Head of caudate nucleus (tissue), 42 donors: ENCODE measurements at regions of chr22 and their contacts with region 1.

Region 1: DNA sequence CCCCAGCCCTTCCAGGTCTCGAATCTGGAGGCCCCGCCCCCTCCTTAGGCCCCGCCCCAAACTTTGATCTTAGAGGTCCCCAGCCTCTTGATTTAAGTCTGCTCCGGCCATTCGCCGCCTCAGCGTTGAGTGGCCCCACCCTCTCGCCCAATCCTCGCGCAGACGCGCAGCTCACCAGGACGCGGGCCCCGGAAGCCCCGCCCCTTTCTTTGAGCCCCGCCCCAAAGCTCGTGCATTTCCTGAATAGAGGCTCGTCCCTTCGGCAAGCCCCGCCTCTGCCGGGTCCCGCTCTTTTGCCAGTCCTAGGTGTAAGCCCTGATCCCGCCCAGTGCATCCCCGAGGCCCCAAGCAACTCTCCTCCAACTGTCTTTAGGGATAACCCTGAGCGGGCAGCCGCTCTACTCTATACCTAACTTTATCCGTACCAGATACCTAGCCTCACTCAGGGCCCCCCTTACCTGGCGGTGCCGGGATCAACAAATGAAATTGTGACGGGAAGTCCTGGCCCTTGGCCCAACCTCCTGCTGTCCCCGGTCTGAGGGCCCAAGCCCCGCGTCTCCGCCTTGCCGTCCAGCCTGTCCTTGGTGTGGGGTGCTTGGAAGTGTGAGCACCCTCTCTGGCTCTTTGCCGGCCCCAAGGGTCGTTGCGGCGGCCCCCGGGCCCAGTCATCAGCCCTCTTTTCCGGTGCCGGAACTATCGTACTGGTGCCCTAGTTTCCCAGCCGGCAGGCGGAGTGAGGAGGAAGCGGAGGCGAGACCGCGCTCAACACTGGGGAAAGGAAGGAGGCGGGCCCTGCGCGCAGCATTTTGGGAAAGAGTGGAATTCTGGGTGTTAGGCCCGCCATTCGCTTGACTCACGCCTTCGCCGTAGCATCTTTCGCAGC is at the start of gene SNRPD3:
- DNase-seq: peak; percentile 98 to 100 (median 99)

Region 2: GRCh38 chr22:24270638-24271408 is 284.6 kb before region 1 on chr22 and contains the start of gene SPECC1L:
- intact Hi-C with region 1: loop called (anchors 10 kb)
- DNase-seq: peak; percentile 69 to 95 (median 88)

Region 3: DNA sequence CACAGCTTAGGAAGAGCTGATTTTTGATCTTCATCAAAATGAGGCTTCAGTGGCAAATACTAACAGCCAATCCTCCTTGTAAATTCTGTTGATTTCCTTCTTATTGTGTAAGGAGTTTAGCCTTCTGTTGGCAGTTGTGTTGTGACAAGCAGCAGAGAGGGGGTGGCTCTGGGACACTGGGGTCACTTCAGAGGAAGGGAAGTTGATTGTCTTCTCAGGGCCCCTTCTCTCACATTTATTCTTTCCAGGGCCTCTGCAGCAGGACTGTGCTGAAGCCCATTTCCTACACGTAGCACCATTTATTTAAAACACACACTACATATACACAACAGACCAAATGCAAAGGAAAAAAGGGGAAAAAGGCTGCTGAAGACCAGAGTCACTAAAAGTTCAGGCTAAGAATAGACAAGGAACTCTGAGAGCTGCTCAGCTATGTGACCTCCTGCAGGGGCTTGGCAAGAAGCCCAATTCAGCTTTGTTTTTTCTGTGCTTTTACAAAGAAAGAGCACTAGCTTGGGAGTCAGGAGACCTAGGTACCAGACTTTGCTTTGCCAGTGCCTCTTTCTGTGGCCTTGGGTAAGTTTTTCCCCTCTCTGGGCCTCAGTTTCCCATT is 88.6 kb before region 1 on chr22:
- intact Hi-C with region 1: no loop called
- DNase-seq: peak in 4 of 42 donors; percentile 15 to 54 (median 38)

Region 4: DNA sequence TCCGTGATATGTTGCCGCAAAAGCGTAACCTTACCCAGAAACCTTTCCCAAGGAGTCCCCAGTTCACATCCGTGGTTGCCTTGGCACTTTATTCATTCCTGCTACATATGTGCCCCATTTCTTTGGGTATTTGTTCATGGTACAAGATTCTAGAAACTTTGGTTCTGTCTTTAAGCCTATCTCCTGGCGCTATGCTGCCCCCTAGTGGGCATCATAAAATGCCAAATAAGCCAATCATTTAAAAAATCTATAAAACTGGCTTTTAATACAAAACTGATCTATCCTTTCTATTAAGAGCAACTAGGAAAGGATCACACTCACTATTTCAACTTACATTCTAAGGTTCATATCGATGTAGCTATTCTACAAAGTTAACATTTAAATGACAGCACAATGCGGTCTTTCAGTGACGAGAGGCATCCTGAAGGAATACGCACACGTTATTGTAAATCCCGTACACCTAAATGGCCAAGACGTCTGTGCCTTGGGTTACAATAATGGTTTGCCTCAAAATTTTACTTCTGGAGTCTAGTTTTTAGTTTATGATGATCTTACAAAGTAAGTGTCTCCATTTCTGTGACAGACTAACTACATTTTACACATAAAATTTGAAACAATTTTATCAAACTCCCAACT is 202.9 kb after region 1 on chr22:
- intact Hi-C with region 1: loop called (anchors 10 kb)
- DNase-seq: peak; percentile 5 to 87 (median 64)